Left ventricle myocardium inferior (tissue), 1 donor: ENCODE measurements at regions of chr15 and their contacts with region 1.

Region 1: GRCh38 chr15:83734487-83734886 is 80.6 kb downstream of the ADAMTSL3 start:
- DNase-seq: no peak
- H3K4me3 ChIP-seq: no peak overlapping the region
- H3K27ac ChIP-seq: no peak overlapping the region
- H3K4me1 ChIP-seq: no peaks in the 10 kb centered on the region
- H3K27me3 ChIP-seq: no peaks in the 10 kb centered on the region
- CTCF ChIP-seq: peak; percentile 55

Region 2: GRCh38 chr15:83854321-83854720 is 119.8 kb after region 1 on chr15:
- intact Hi-C with region 1: no loop called
- DNase-seq: no peak
- H3K4me3 ChIP-seq: no peak overlapping the region
- H3K27ac ChIP-seq: peak overlapping the region; percentile 68
- H3K4me1 ChIP-seq: peaks cover 40% of the 10 kb centered on the region
- H3K27me3 ChIP-seq: no peaks in the 10 kb centered on the region
- CTCF ChIP-seq: no peak

Region 3: DNA sequence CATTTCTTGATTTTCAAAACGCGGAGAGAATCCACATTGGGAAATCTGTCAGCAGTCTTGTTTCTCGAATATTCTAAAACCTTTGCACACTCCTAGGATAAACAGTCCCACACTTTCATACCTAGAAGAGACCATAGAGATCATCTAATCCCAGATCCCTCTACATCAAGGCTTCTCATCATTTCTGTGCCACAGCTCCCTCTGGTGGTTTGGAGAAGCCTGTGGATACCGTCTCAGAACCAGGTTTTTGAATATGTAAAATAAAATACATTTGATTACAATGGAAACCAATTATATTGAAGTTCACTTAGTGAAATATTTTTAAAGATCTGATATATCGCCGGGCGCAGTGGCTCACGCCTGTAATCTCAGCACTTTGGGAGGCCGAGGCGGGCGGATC is 289.1 kb after region 1 on chr15:
- intact Hi-C with region 1: loop called (anchors 10 kb)
- DNase-seq: no peak
- H3K4me3 ChIP-seq: no peak overlapping the region
- H3K27ac ChIP-seq: no peak overlapping the region
- H3K4me1 ChIP-seq: no peaks in the 10 kb centered on the region
- H3K27me3 ChIP-seq: no peaks in the 10 kb centered on the region
- CTCF ChIP-seq: peak; percentile 68